HEK293 (cell line): ENCODE measurements at regions of chr9 and their contacts with region 1.

Region 1: GRCh38 chr9:89549031-89549644 is 51.2 kb upstream of the SEMA4D start:
- H3K4me3 ChIP-seq: no peak overlapping the region
- H3K27ac ChIP-seq: no peak overlapping the region
- H3K4me1 ChIP-seq: no peaks in the 10 kb centered on the region
- CTCF ChIP-seq: peak; percentile 56

Region 2: GRCh38 chr9:89410641-89411350 is 138.3 kb before region 1 on chr9:
- CTCF ChIA-PET with region 1: interaction called, 11 read pairs
- POLR2A ChIA-PET with region 1: no interaction called
- H3K4me3 ChIP-seq: no peak overlapping the region
- H3K27ac ChIP-seq: no peak overlapping the region
- H3K4me1 ChIP-seq: no peaks in the 10 kb centered on the region
- CTCF ChIP-seq: no peak

Region 3: GRCh38 chr9:89428901-89429890 is 119.9 kb before region 1 on chr9:
- CTCF ChIA-PET with region 1: interaction called, 15 read pairs
- POLR2A ChIA-PET with region 1: no interaction called
- H3K4me3 ChIP-seq: no peak overlapping the region
- H3K27ac ChIP-seq: no peak overlapping the region
- H3K4me1 ChIP-seq: no peaks in the 10 kb centered on the region
- CTCF ChIP-seq: no peak

Region 4: DNA sequence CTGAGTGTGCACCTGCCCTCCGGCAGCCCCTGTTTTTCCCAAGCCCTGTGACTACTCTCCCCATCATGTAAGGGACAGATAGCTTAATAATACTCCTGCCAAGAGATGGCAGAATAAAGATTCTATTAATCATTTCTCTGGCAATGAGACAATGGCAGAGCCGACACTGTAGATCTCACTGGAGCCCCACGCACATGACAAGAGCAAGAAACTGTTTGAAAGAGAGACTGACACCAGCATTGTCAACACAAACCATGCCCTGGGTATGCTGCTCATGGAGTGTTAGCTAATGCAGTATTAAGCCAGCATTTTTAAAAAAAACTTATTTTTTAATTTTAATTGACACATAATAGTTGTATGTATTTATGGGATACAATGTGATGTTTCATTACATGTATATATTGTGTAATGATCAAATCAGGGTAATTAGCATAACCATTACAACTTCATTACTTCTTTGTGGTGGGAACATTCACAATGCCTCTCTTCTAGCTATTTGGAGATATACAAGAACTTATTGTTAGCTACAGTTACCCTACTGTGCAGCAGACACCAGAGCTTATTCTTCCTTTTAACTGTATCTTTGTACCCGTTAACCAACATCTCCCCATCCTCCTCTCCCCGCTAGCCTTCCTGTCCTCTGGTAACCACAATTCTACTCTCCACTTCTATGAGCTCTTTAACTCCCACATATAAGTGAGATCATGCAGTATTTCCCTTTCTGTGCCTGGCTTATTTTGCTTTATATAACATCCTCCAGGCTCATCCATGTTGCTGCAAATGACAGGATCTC is 19.7 kb before region 1 on chr9:
- CTCF ChIA-PET with region 1: interaction called, 25 read pairs
- POLR2A ChIA-PET with region 1: no interaction called
- H3K4me3 ChIP-seq: no peak overlapping the region
- H3K27ac ChIP-seq: no peak overlapping the region
- H3K4me1 ChIP-seq: no peaks in the 10 kb centered on the region
- CTCF ChIP-seq: no peak

Region 5: GRCh38 chr9:89538871-89539270 is 10.3 kb before region 1 on chr9:
- CTCF ChIA-PET with region 1: interaction called, 28 read pairs
- POLR2A ChIA-PET with region 1: no interaction called
- H3K4me3 ChIP-seq: no peak overlapping the region
- H3K27ac ChIP-seq: no peak overlapping the region
- H3K4me1 ChIP-seq: no peaks in the 10 kb centered on the region
- CTCF ChIP-seq: no peak

Region 6: GRCh38 chr9:89564352-89564878 is 15.3 kb after region 1 on chr9:
- CTCF ChIA-PET with region 1: interaction called, 20 read pairs
- POLR2A ChIA-PET with region 1: no interaction called
- H3K4me3 ChIP-seq: no peak overlapping the region
- H3K27ac ChIP-seq: no peak overlapping the region
- H3K4me1 ChIP-seq: no peaks in the 10 kb centered on the region
- CTCF ChIP-seq: 0 out of 2 replicates have a peak, but pooled peaks have one; percentile 6

Region 7: GRCh38 chr9:89597711-89598625 is 48.8 kb after region 1 on chr9:
- CTCF ChIA-PET with region 1: interaction called, 13 read pairs
- POLR2A ChIA-PET with region 1: no interaction called
- H3K4me3 ChIP-seq: no peak overlapping the region
- H3K27ac ChIP-seq: no peak overlapping the region
- H3K4me1 ChIP-seq: no peaks in the 10 kb centered on the region
- CTCF ChIP-seq: peak; percentile 63